Breast epithelium (tissue), 4 donors: ENCODE measurements at regions of chr3 and their contacts with region 1.

Region 1: GRCh38 chr3:178870085-178870484 is 201.5 kb downstream of the ZMAT3 start:
- DNase-seq: no peak
- H3K4me3 ChIP-seq: no peak overlapping the region
- H3K27ac ChIP-seq: no peak overlapping the region
- H3K4me1 ChIP-seq: no peaks in the 10 kb centered on the region
- H3K27me3 ChIP-seq: no peaks in the 10 kb centered on the region
- CTCF ChIP-seq: no peak
- POLR2A ChIP-seq: no peak

Region 2: DNA sequence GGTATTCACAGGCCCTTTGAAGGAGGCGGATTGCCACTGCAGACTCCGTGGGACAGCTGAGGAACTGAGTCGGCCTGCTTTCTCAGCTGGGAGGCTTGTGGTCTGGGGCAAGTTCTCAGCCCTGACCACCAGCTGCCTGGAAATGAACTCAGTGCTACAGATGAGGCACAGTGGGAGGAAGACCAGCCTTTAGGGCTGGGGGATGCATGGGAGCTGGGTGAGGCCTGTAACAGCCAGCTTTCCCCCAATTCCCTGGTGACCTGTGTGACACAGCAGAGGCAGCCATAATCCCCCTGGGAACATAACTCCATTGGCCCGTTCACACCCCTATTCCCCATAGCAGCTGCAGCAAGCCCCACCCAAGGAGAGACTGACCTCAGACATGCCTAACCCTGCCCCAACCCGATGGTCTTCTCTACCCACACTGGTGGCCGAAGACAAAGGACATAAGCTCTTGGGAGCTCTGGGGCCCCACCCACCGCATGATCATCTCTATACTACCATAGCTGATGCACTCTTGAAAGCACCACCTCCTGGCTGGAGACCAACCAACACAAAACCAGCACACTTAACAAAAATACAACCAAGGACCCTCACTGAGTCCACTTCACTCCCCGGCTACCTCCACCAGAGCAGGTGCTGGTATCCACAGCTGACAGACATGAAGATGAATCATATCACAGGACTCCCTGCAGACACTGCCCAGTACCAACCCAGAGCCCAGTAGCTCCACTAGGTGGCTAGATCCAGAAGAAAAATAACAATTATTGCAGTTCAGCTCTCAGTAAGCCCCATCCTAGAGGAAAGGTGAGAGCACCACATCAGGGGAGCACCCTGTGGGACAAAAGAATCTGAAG is 176.6 kb after region 1 on chr3:
- intact Hi-C with region 1: loop called (anchors 5 kb)
- DNase-seq: no peak
- H3K4me3 ChIP-seq: no peak overlapping the region
- H3K27ac ChIP-seq: no peak overlapping the region
- H3K4me1 ChIP-seq: no peaks in the 10 kb centered on the region
- H3K27me3 ChIP-seq: no peaks in the 10 kb centered on the region
- CTCF ChIP-seq: no peak
- POLR2A ChIP-seq: no peak